Motor neuron (in vitro differentiated cells): ENCODE measurements at regions of chr11 and their contacts with region 1.

Region 1: DNA sequence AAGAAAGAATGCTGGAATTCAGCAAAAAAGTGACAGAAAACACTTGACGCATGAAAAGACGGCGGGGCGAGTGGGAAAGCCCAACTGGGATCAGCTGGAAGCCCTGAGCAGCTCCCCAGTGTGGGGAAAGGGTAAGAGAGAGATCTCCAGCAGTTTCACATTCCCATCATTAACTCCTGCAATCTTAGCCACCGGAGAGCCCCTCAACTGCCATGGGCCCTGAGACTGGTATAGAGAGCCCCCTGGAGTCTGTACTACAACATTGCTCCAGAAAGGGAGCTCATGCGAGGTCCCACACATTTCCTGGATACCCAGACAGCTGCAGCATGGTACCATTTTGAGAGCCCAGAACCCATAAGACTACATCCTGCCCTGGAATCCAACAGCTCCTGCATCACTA is 31.1 kb downstream of the MRGPRX4 start:
- ATAC-seq: peak in 3 of 8 experiments; percentile 69 to 94 (median 91)
- H3K4me3 ChIP-seq: no peak overlapping the region
- H3K27ac ChIP-seq: no peak overlapping the region
- H3K4me1 ChIP-seq: no peaks in the 10 kb centered on the region

Region 2: GRCh38 chr11:18115360-18116127 is 88.2 kb before region 1 on chr11:
- in situ Hi-C with region 1: loop called in 1 of 9 experiments (anchors 10 kb)
- ATAC-seq: peak; percentile 89 to 100 (median 94)
- H3K4me3 ChIP-seq: no peak overlapping the region
- H3K27ac ChIP-seq: no peak overlapping the region
- H3K4me1 ChIP-seq: peaks cover 0 to 2% of the 10 kb centered on the region in 2 donors

Region 3: GRCh38 chr11:18352581-18352980 is 148.9 kb after region 1 on chr11:
- in situ Hi-C with region 1: no loop called
- ATAC-seq: peak in 2 of 8 experiments; percentile 26 to 35
- H3K4me3 ChIP-seq: no peak overlapping the region
- H3K27ac ChIP-seq: no peak overlapping the region
- H3K4me1 ChIP-seq: no peaks in the 10 kb centered on the region